ENCODE measurements at regions of chr1 and their contacts with region 1.

Region 1: GRCh38 chr1:145927063-145927886 is at the start of gene RBM8A:
- DNase-seq: peak; percentile 88 to 96
- H3K4me3 ChIP-seq: peak within 1 kb of the TSS; percentile 97
- H3K27ac ChIP-seq: peak within 1 kb of the TSS; percentile 84
- H3K4me1 ChIP-seq: peaks cover 16% of the 10 kb centered on the region
- H3K27me3 ChIP-seq: no peaks in the 10 kb centered on the region
- CTCF ChIP-seq: peak; percentile 87
- total RNA-seq, gene RBM8A: 129 and 181 TPM in 2 replicates

Region 2: DNA sequence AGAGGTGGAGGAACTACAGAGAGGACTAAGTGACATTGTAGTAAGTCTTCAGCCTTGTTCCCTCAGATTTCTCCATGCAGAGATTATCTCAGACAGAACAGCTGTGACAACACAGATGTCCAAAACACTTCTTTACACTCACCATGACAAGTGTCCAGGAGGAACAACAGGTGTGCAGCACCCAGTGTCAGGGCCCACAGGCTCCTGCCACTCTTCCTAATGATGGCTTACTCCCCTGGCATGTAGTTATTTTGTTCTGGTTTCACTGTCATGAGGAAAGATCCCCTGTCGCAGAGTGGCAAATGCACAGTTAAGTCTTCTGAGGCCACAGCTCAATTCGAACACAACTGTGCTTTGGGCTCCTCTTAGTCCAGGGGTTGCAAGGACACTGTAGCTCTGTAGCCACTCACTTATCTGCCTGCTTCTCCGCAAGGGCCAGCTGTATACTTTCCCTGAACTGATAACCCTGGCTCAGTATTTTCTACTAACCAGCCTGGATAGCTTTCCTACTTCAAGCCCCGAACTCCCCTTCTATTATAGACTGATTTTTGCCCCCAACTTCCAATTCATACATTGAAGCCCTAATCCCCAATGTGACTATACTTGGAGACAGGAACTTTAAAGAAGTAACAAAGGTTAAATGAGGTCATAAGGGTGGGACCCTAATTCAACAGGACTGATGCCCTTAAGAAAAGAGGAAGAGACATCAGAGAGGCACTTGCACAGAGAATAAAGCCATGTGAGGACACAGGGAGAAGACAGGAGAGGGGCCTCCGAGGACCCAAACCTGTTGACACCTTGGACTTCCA is 231.2 kb before region 1 on chr1:
- CTCF ChIA-PET with region 1: no interaction called
- POLR2A ChIA-PET with region 1: no interaction called
- intact Hi-C with region 1: no loop called
- DNase-seq: no peak
- H3K4me3 ChIP-seq: no peak overlapping the region
- H3K27ac ChIP-seq: no peak overlapping the region
- H3K4me1 ChIP-seq: peaks cover 5% of the 10 kb centered on the region; the same call in 1 of the 2 replicates
- H3K27me3 ChIP-seq: no peaks in the 10 kb centered on the region
- CTCF ChIP-seq: no peak

Region 3: DNA sequence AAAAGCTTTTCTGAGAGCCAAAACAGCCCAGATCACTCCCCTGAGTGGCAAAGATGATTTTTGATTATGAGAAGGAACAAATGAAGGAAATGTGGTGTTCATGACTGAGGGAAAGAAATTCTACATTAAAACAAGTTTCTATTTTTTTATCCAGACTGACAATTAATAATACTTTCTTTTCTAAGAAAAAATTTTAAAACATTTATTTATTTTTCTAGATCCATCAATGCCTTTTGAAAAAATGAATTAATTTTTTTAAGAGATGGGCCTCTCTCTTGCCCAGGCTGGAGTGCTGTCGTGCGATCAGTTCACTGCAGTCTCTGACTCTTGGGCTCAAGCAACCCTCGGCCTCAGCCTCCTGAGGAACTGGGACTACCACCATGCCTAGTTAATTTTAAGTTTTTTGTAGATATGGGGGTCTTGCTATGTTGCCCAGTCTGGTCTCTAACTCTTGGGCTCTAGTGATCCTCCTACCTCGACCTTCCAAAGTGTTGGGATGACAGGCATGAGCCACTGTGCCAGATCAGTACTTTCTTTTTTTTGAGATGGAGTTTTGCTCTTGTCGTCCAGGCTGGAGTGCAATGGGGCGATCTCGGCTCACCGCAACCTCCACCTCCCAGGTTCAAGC is 80.3 kb after region 1 on chr1:
- CTCF ChIA-PET with region 1: no interaction called
- POLR2A ChIA-PET with region 1: interaction called, 14 read pairs
- intact Hi-C with region 1: no loop called
- DNase-seq: no peak
- H3K4me3 ChIP-seq: no peak overlapping the region
- H3K27ac ChIP-seq: no peak overlapping the region
- H3K4me1 ChIP-seq: peaks cover 3% of the 10 kb centered on the region; the same call in 1 of the 2 replicates
- H3K27me3 ChIP-seq: no peaks in the 10 kb centered on the region
- CTCF ChIP-seq: peak; percentile 37; the same call in 1 of the 2 replicates

Region 4: DNA sequence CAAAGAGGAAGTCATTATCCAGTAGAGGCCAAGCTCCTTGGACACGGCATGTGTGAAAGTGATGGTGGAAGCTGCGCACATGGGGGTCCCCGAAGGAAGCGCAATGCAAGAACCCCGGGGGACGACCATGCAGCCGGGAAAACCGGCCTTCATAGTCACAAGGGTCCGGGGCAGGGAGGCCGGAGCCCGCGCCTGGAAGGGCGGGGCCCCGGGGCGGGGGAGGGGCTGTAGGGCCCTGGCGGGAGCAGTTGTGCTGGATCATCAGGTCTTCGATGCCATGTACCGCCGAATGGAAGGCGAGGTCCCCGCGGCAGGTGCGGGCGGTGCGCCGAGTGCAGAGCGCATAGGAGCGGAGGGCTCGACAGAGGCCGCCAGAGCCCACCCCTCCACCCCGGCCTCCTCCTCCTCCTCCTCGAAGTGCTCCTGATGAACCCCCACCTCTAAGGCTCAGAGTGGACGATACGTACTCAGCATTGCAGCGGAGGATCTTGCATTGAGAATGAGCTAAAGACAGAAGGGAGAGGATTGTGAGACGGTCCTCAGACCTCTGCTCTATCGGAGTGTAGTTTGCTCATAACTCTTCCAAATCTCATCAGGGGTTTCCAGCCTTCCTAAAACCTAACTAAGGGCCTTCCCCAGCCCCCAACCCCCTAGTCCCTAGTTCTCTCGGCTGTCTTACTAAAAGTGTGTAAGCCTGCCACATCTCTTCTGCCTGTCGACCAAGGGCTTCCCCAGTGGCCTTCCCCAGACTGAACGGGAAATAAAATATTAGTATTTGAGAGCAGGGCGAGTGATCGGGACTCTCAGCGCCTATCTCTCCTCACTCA is 92.2 kb after region 1 on chr1:
- CTCF ChIA-PET with region 1: interaction called, 10 read pairs
- POLR2A ChIA-PET with region 1: no interaction called
- intact Hi-C with region 1: no loop called
- DNase-seq: no peak
- H3K4me3 ChIP-seq: no peak overlapping the region
- H3K27ac ChIP-seq: no peak overlapping the region
- H3K4me1 ChIP-seq: no peaks in the 10 kb centered on the region
- H3K27me3 ChIP-seq: peaks cover 8% of the 10 kb centered on the region; the same call in 1 of the 2 replicates
- CTCF ChIP-seq: no peak